GM10248 (cell line): ENCODE measurements at regions of chr12 and their contacts with region 1.

Region 1: GRCh38 chr12:3299929-3300832 is 190.8 kb upstream of the PRMT8 start:
- DNase-seq: peak; percentile 83
- CTCF ChIP-seq: peak; percentile 95

Region 2: GRCh38 chr12:3281588-3282383 is 18.4 kb before region 1 on chr12:
- CTCF ChIA-PET with region 1: interaction called, 45 read pairs
- POLR2A ChIA-PET with region 1: no interaction called
- DNase-seq: no peak
- CTCF ChIP-seq: no peak

Region 3: DNA sequence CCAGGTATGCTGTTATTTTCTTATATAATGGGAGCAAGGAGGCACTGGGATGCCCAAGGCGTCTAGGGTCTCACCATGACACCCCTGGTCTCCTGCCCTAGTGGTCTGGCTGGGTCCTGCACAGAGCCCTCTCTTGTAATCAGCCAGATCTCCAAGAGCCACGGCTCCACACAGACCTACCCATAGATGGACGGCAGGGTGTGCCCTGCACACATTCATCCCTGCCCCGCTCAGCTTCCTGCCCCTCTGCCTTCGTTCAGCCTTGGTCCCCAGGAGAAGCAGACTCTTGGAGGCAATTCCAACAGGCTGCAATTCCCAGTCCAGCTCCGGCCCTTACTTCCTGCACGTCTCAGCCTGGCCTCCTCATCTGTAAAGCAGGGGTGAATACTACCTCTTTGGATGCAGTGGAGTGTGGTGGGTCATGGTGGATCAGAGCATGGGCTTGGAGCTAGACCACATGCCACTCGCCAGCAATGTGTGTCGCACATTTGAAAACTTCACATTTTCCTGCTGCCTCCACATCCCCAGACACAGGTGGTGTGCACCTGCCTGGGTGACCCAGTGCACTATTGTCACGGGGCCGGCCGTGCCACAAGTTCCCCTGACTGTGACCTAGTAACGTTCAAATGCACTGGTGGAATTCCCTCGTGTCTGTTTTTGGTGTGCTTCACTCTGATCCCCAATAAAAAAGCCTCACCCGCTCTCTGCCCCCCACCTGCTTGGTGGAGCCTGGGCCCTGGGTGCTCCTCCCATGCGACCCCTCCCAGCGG is 19.7 kb after region 1 on chr12:
- CTCF ChIA-PET with region 1: interaction called, 102 read pairs
- POLR2A ChIA-PET with region 1: no interaction called
- DNase-seq: no peak
- CTCF ChIP-seq: no peak

Region 4: GRCh38 chr12:3770886-3771285 is 470.7 kb after region 1 on chr12:
- CTCF ChIA-PET with region 1: interaction called, 29 read pairs
- POLR2A ChIA-PET with region 1: no interaction called
- DNase-seq: no peak
- CTCF ChIP-seq: no peak

Region 5: DNA sequence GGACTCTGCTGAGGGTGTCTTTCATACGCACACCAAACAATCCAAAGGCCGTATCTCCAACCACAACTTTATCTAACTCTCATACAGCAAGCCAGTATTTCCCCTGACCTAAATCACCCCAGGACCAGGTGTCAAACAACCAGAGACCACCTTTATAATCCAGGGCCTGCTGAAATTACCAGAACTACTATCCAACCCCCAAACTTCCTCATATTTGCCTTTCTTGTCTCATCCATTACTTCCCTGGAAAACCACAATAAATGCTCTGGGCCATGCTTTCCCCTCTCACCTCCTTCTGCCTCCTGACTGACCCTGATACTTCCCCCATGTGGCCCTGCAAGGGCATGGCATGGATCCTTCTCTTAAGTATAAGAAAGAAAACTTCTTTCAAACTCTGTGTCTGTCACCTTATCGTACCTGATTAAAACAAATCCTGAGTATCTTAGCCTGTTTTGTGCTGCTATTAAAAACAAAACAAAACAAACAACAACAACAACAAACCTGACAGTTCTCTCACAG is 497.4 kb after region 1 on chr12:
- CTCF ChIA-PET with region 1: interaction called, 56 read pairs
- POLR2A ChIA-PET with region 1: no interaction called
- DNase-seq: no peak
- CTCF ChIP-seq: no peak

Region 6: GRCh38 chr12:3827301-3828000 is 527.3 kb after region 1 on chr12:
- CTCF ChIA-PET with region 1: interaction called, 15 read pairs
- POLR2A ChIA-PET with region 1: no interaction called
- DNase-seq: peak; percentile 48
- CTCF ChIP-seq: no peak